HepG2 (cell line): ENCODE measurements at regions of chr14 and their contacts with region 1.

Region 1: DNA sequence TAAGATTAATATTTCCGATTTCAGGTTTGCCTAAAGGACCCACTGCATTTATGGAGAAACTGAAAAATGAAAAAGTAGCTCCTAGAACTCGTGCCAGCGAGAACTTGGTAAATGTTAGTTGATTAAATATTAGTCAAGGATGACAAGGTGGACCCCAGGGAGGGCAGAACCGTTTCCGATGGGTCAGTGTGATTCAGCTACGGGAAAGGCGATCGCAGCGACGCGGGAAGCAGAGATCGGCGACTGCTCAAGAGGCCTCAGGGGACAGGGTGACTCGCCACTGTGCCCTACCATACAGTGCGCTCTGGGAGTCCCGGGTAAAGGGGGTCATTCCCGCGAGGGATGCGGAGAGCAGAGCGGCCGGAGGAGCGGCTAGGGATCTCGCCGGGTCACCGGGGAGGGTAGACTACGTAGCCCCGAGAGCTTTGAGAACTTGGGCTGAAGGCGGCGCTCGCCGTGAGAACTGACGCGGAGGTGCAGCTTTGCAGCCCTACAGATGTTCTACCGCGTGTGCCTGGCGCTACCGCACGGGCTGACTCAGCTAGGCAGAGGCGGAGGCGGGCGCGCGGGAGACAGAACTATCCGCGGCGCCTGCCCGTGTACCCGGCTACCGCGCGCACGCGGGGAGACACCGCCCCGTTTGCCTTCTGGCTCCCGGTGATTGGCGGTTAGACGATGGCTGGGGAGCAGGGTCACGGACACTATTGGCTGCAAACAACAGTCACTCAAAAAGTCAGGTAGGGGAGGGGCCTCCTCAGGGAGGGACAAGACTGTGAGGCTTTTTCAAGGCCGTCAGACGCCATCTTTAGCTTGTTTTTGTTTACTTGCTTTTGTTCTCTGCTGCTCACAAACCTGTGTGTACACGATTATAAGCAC is 3.2 kb downstream of the C14orf93 start:
- DNase-seq: peak; percentile 100
- ATAC-seq: peak; percentile 97
- H3K4me3 ChIP-seq: peak overlapping the region; percentile 68 to 82 (median 80)
- H3K27ac ChIP-seq: peak overlapping the region; percentile 86
- H3K4me1 ChIP-seq: peaks cover 52% of the 10 kb centered on the region
- H3K27me3 ChIP-seq: no peaks in the 10 kb centered on the region; a peak in 1 of 5 replicates
- CTCF ChIP-seq: peak; percentile 76
- EP300 ChIP-seq: peak in 1 of 2 experiments; percentile 9; a peak in 3 of 4 replicates
- POLR2A ChIP-seq: peak; percentile 96 to 98
- RAD21 ChIP-seq: peak; percentile 91

Region 2: DNA sequence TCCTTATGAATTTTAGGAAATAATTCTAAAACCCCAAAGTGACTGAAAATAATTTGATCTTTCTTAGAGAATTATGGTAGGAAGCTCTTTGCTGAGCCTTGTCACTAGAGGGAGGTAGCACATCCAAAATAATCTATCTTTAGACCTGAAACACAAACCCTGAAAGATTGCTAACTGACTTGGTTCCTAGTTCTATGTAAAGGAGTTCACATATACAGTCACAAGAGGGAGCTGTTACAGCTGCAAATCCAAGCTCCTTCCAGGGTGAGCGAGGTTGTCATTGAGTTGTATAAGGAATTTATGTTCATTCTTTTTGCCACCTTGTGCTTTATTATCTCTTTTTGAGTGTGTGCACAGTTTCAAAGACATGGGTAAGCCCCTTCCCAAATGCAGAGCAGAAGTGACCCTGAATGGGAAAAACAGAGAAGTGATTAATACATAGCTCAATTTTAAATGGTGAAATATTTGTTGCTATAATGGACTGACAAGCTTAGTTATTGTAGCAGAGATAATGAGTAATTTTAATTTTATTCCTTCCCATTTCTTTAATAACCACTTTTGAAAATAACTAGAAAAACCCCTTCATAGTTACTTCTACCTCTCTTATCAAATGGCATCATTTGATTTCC is 805.7 kb before region 1 on chr14:
- CTCF ChIA-PET with region 1: no interaction called
- POLR2A ChIA-PET with region 1: no interaction called
- in situ Hi-C with region 1: no loop called
- intact Hi-C with region 1: no loop called
- DNase-seq: peak; percentile 71
- ATAC-seq: peak; percentile 99
- H3K4me3 ChIP-seq: no peak overlapping the region
- H3K27ac ChIP-seq: no peak overlapping the region
- H3K4me1 ChIP-seq: no peaks in the 10 kb centered on the region
- H3K27me3 ChIP-seq: no peaks in the 10 kb centered on the region
- CTCF ChIP-seq: peak; percentile 68
- EP300 ChIP-seq: no peak
- POLR2A ChIP-seq: no peak
- RAD21 ChIP-seq: no peak

Region 3: DNA sequence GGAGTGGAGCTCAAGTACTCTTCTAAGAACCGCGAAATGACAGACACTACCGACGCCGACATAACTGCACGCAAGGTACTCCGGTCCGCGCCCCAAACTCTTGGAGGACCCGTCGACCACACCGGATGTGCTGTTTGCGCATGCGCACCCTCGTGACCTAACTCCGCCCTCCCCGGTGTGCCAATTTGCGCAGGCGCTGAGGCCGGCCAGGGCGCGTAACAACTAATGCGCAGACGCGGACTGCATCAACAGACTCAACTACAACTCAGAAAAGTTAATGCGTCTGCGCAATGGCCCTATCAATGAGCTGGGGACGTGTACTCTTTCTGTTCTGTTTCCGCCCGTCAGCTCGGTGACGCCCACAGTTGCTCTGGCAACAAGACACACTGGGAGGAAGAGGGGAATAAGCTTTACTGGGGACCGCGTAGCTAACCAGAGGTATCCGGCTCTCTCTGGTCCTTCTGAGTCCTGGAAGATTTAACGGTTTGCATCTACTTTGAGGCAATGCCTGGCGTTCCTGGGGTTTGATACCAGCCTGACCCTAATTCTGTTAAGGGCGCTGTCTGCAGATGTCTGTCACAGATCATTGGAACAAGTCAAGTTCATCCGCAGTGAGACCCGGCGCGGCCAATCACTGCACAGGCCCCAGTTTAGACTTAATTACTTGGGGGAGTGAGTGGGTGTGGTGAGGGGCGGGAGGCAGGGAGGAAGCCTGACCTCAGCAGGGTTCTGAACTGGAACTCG is 417.5 kb before region 1 on chr14 and contains the start of gene DAD1:
- CTCF ChIA-PET with region 1: no interaction called
- POLR2A ChIA-PET with region 1: interaction called, 16 read pairs
- in situ Hi-C with region 1: no loop called
- intact Hi-C with region 1: no loop called
- DNase-seq: peak; percentile 100
- ATAC-seq: peak; percentile 98
- H3K4me3 ChIP-seq: peak within 1 kb of the TSS; percentile 85 to 92 (median 86)
- H3K27ac ChIP-seq: peak within 1 kb of the TSS; percentile 80
- H3K4me1 ChIP-seq: peaks cover 52% of the 10 kb centered on the region
- H3K27me3 ChIP-seq: peaks cover 0 to 23% of the 10 kb centered on the region in 2 experiments; a peak in 2 of 5 replicates
- CTCF ChIP-seq: no peak
- EP300 ChIP-seq: 0 out of 4 replicates have a peak, but pooled peaks of 1 of the 2 experiments have one; percentile 19
- POLR2A ChIP-seq: peak in 1 of 2 experiments; percentile 97; a peak in 2 of 4 replicates
- RAD21 ChIP-seq: peak; percentile 67; the same call in 1 of the 2 replicates
- total RNA-seq, gene DAD1: 385 and 558 TPM in 2 replicates

Region 4: DNA sequence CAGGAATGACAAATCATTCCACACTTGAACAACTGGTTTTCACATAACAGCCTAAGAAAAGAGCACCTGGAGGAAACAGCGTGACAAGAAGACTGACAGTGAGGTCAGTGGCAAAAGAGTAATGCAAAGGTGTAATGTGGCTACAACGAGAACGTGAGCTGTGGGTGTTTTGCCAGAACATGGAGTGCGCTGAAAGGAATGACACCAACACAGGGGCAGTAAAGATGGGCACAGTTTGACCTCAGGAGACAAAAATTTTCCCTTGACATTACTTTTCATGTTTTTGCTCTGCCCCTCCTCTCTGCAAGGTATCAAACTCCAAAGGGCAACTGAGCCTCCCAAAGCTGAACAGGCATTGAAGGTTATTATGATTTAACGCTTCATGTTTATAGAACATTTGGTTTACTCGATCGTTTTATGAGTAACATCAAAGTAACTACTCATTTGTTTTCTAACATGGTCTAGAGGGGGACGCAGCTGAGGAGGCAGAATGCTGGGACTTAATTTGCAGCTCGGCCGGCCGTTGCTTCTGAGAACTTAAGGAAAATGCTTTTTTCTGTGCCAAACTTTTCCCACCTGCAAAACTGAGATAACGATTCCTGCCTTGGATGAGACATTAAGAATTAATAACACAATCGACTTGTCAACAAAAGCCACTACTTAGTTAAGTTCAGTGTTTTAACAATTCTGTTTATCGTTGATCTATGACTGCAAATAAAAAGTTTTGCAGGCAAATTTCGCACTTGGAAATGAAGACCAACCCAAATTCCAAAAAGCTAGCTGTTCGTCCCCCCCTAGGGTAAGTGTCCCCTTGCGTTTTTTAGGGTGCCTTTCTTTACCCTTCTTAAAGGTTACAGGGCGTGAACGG is 50.8 kb before region 1 on chr14:
- CTCF ChIA-PET with region 1: no interaction called
- POLR2A ChIA-PET with region 1: interaction called, 29 read pairs
- in situ Hi-C with region 1: no loop called
- intact Hi-C with region 1: no loop called
- DNase-seq: peak; percentile 48
- ATAC-seq: peak; percentile 27
- H3K4me3 ChIP-seq: peak overlapping the region; percentile 73 to 78 (median 77)
- H3K27ac ChIP-seq: peak overlapping the region; percentile 78
- H3K4me1 ChIP-seq: peaks cover 47% of the 10 kb centered on the region
- H3K27me3 ChIP-seq: no peaks in the 10 kb centered on the region; a peak in 1 of 5 replicates
- CTCF ChIP-seq: no peak
- EP300 ChIP-seq: peak in 1 of 2 experiments; percentile 25; a peak in 1 of 4 replicates
- POLR2A ChIP-seq: no peak
- RAD21 ChIP-seq: no peak

Region 5: DNA sequence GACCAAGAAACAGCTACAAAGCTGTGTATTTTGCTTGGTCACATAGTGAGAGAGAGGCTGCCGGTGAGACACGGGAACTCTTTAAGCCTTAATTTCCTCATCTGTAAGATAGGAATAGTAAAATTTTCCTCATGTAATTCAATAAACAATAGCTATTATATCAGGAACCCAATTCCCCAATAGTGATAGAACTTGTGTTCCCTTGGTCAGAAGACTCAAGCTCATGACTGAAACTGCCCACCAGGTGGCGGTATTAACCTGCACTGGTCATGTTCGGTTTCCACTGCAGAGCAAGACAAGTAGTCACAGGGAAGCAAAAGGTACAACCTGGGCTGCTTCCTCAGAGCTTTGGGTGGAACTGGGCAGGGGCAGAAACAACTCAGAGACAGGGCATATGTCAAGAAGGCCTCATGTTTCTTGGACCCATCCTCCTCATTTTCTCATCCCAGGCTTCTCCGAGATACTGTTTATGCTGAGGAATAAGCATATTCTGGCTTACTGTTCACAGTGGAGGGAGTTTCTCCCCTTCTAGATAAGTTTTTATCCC is 20.2 kb before region 1 on chr14:
- CTCF ChIA-PET with region 1: interaction called, 8 read pairs
- POLR2A ChIA-PET with region 1: interaction called, 561 read pairs
- in situ Hi-C with region 1: no loop called
- intact Hi-C with region 1: loop called (anchors 2 kb)
- DNase-seq: peak; percentile 93
- ATAC-seq: peak; percentile 56
- H3K4me3 ChIP-seq: no peak overlapping the region
- H3K27ac ChIP-seq: no peak overlapping the region
- H3K4me1 ChIP-seq: peaks cover 37% of the 10 kb centered on the region
- H3K27me3 ChIP-seq: no peaks in the 10 kb centered on the region; a peak in 1 of 5 replicates
- CTCF ChIP-seq: no peak
- EP300 ChIP-seq: 0 out of 4 replicates have a peak, but pooled peaks of 1 of the 2 experiments have one; percentile 14
- POLR2A ChIP-seq: no peak
- RAD21 ChIP-seq: peak; percentile 96

Region 6: DNA sequence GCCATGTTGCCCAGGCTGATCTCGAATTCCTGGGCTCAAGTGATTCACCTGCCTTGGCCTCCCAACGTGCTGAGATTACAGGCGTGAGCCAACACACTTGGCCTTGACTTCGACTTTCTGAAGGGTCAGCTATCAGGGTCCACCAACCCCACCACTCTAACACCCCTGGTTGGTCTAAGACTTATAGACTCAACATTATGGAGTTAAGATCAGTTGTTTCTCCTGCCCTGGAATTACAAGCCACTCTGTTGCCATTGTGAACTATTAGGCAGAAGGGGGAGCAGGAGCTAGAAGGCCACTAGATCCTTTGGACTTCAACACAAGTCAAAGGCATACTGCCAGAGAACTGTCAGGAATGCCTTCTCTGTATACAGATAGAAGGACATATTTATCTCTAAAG is 33.3 kb after region 1 on chr14:
- CTCF ChIA-PET with region 1: no interaction called
- POLR2A ChIA-PET with region 1: interaction called, 203 read pairs
- in situ Hi-C with region 1: no loop called
- intact Hi-C with region 1: no loop called
- DNase-seq: peak; percentile 68
- ATAC-seq: peak; percentile 48
- H3K4me3 ChIP-seq: no peak overlapping the region
- H3K27ac ChIP-seq: no peak overlapping the region
- H3K4me1 ChIP-seq: peaks cover 18% of the 10 kb centered on the region
- H3K27me3 ChIP-seq: peaks cover 16 to 33% of the 10 kb centered on the region in 2 experiments
- CTCF ChIP-seq: no peak
- EP300 ChIP-seq: no peak
- POLR2A ChIP-seq: no peak
- RAD21 ChIP-seq: no peak

Region 7: DNA sequence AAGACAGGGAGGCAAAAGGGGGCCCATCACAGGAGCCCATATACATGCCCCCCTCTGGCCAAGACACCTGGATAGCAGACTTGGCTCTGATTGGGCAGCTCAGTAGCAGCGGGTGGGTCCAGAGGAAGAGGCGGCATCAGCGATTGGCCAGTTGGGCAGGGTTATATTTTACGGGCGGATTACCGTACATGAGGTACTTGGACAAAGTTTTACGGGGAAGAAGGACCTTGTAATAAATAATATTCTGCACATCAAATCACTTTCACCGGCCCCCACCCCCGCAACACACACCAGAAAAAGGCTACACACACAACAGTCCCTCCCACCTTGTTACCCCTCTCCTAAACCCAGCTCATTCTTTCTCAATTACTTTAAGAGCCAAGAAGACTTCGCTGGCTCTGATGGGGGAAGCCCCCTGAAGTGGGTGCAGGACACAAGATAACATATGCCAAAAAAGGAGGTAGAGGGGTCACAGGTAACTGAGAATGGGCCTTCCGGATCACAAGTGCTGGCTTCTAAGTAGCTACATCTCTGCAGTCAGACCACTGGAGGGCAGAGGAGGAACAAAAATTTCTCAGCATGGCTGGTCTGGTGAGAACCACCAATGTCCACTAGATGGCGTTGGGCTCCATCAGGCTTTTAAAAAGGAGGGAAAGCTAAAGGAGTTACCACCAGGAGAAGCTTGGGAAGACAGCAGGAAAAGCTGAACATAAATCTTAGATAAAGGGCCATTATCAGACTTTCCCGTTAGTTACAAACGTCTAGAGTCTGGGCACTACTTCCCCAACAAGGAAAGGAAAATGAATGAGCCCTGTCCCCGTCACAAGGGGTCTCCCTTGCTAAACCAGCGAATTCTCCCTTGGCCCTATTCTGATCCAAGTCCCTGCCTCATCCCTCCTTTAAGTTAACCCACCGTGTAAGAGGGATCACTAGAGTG is 62.0 kb after region 1 on chr14:
- CTCF ChIA-PET with region 1: no interaction called
- POLR2A ChIA-PET with region 1: interaction called, 39 read pairs
- in situ Hi-C with region 1: no loop called
- intact Hi-C with region 1: no loop called
- DNase-seq: peak; percentile 98
- ATAC-seq: peak; percentile 79
- H3K4me3 ChIP-seq: no peak overlapping the region
- H3K27ac ChIP-seq: peak overlapping the region; percentile 5
- H3K4me1 ChIP-seq: peaks cover 42% of the 10 kb centered on the region
- H3K27me3 ChIP-seq: no peaks in the 10 kb centered on the region; a peak in 1 of 5 replicates
- CTCF ChIP-seq: peak; percentile 99
- EP300 ChIP-seq: no peak; a peak in 1 of 4 replicates
- POLR2A ChIP-seq: peak in 1 of 2 experiments; percentile 24; a peak in 2 of 4 replicates
- RAD21 ChIP-seq: peak; percentile 94

Region 8: DNA sequence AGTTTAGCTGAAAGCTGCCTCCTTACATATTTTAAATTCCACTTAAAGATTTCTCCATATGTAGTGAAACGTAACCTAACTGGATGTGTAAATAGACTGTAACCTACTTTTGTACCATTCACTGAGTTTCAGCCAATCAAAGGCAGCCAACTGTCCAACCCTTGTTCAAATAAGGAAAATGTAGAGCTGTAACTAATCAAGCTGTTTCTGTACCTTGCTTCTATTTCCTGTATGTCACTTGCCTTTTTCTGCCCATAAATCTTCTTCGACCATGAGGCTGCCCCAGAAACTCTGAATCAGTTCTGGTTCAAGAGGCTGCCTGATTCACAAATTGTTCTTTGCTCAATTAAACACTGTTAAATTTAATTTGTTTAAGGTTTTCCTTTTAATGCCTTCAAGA is 170.4 kb after region 1 on chr14:
- CTCF ChIA-PET with region 1: no interaction called
- POLR2A ChIA-PET with region 1: no interaction called
- in situ Hi-C with region 1: no loop called
- intact Hi-C with region 1: no loop called
- DNase-seq: no peak
- ATAC-seq: no peak; the same call in 2 of the 3 replicates
- H3K4me3 ChIP-seq: no peak overlapping the region
- H3K27ac ChIP-seq: no peak overlapping the region
- H3K4me1 ChIP-seq: peaks cover 6% of the 10 kb centered on the region; the same call in 1 of the 2 replicates
- H3K27me3 ChIP-seq: peaks cover 4 to 40% of the 10 kb centered on the region in 2 experiments; a peak in 4 of 5 replicates
- CTCF ChIP-seq: no peak
- EP300 ChIP-seq: no peak
- POLR2A ChIP-seq: no peak
- RAD21 ChIP-seq: no peak

Region 9: GRCh38 chr14:23392613-23393012 is 385.8 kb after region 1 on chr14:
- CTCF ChIA-PET with region 1: no interaction called
- POLR2A ChIA-PET with region 1: no interaction called
- in situ Hi-C with region 1: no loop called
- intact Hi-C with region 1: no loop called
- DNase-seq: no peak
- ATAC-seq: no peak
- H3K4me3 ChIP-seq: no peak overlapping the region
- H3K27ac ChIP-seq: no peak overlapping the region
- H3K4me1 ChIP-seq: no peaks in the 10 kb centered on the region
- H3K27me3 ChIP-seq: peaks cover 33 to 82% of the 10 kb centered on the region in 2 experiments
- CTCF ChIP-seq: no peak
- EP300 ChIP-seq: no peak
- POLR2A ChIP-seq: no peak
- RAD21 ChIP-seq: no peak